Activated CD4-positive, alpha-beta T cell treated with anti-CD3 and anti-CD28 coated beads, Interleukin-2, amount 10 ng/mL, durations not matched to agents 24 days and 14 days (primary cell): ENCODE measurements at regions of chr14 and their contacts with region 1.

Region 1: GRCh38 chr14:99480917-99481744 is at the start of gene CCNK:
- DNase-seq: peak; percentile 100
- H3K4me3 Mint-ChIP-seq: peak within 1 kb of the TSS; percentile 98
- H3K27ac Mint-ChIP-seq: peak within 1 kb of the TSS; percentile 98
- H3K4me1 Mint-ChIP-seq: peaks cover 40% of the 10 kb centered on the region
- H3K27me3 Mint-ChIP-seq: no peaks in the 10 kb centered on the region
- total RNA-seq, gene CCNK: 79.5 and 83.6 TPM in 2 replicates

Region 2: GRCh38 chr14:99271951-99272631 is 209.0 kb before region 1 on chr14 and contains the start of gene BCL11B:
- intact Hi-C with region 1: loop called (anchors 2 kb)
- DNase-seq: peak; percentile 96
- H3K4me3 Mint-ChIP-seq: peak within 1 kb of the TSS; percentile 91
- H3K27ac Mint-ChIP-seq: peak within 1 kb of the TSS; percentile 95
- H3K4me1 Mint-ChIP-seq: peaks cover 42% of the 10 kb centered on the region
- H3K27me3 Mint-ChIP-seq: peaks cover 13% of the 10 kb centered on the region
- total RNA-seq, gene BCL11B: 48.2 and 48.5 TPM in 2 replicates

Region 3: DNA sequence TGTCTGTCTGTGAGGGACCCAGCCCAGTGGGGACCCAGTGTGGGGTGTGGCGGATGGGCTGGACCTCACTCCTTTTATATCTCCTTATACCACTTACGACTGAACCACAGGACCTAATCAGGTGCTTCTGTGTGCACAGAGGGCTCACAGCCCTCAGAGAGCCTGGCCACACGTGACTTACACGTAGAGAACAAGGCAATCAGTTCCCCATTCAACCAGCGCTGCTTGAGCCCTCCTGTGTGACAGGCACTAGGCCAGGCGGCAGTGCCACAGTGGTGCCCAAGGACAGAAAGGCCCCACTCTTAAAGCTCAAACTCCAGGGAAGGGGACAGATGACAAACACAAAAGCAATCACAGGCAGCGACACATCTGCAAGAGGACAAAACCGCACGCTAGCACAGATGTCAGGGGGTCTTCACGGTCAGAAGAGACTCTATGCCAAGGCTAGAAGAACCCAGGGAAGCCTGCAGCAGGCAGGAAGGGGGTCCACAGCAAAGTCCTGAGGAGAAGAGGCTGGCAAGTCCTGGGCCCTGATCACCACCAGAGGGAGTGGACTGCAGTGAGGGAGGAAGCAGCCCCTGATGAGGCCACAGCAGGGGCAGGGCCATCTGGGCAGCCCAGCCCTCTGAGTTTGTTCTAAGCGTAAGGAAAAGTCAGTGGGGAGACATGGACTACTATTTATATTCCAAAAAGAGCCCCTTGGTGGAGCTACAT is 39.8 kb before region 1 on chr14:
- intact Hi-C with region 1: no loop called
- DNase-seq: no peak
- H3K4me3 Mint-ChIP-seq: no peak overlapping the region
- H3K27ac Mint-ChIP-seq: peak overlapping the region; percentile 30
- H3K4me1 Mint-ChIP-seq: peaks cover 27% of the 10 kb centered on the region
- H3K27me3 Mint-ChIP-seq: no peaks in the 10 kb centered on the region

Region 4: DNA sequence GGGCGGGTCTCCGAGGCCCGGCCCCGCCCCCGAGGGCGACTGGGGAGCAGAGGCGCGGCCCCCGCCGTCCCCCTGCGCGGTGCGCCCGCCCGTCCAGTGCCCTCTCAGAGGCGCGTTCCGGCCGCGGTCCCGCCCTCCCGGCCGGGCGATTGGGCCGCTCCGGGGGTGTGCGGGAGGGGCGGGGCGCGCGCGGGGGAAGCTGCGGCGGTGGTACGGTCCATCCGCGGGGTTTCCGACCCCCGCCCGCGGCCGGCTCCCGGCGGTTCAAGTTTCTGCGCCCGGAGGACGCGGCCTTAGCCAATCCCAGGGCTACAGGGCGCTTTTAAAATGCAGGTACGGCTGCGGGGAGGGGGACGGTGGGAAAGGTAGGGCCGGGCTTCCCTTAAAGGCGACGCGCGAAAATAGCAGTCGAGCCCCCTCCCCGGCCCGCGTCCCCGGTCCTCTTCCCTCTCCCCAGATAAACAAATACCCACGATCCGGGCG is 123.2 kb after region 1 on chr14:
- intact Hi-C with region 1: loop called (anchors 1 kb)
- DNase-seq: peak; percentile 99
- H3K4me3 Mint-ChIP-seq: peak overlapping the region; percentile 84
- H3K27ac Mint-ChIP-seq: peak overlapping the region; percentile 91
- H3K4me1 Mint-ChIP-seq: peaks cover 22% of the 10 kb centered on the region
- H3K27me3 Mint-ChIP-seq: peaks cover 12% of the 10 kb centered on the region

Region 5: GRCh38 chr14:99779751-99780150 is 298.6 kb after region 1 on chr14:
- intact Hi-C with region 1: no loop called
- DNase-seq: no peak
- H3K4me3 Mint-ChIP-seq: no peak overlapping the region
- H3K27ac Mint-ChIP-seq: no peak overlapping the region
- H3K4me1 Mint-ChIP-seq: peaks cover 4% of the 10 kb centered on the region
- H3K27me3 Mint-ChIP-seq: peaks cover 33% of the 10 kb centered on the region

Region 6: DNA sequence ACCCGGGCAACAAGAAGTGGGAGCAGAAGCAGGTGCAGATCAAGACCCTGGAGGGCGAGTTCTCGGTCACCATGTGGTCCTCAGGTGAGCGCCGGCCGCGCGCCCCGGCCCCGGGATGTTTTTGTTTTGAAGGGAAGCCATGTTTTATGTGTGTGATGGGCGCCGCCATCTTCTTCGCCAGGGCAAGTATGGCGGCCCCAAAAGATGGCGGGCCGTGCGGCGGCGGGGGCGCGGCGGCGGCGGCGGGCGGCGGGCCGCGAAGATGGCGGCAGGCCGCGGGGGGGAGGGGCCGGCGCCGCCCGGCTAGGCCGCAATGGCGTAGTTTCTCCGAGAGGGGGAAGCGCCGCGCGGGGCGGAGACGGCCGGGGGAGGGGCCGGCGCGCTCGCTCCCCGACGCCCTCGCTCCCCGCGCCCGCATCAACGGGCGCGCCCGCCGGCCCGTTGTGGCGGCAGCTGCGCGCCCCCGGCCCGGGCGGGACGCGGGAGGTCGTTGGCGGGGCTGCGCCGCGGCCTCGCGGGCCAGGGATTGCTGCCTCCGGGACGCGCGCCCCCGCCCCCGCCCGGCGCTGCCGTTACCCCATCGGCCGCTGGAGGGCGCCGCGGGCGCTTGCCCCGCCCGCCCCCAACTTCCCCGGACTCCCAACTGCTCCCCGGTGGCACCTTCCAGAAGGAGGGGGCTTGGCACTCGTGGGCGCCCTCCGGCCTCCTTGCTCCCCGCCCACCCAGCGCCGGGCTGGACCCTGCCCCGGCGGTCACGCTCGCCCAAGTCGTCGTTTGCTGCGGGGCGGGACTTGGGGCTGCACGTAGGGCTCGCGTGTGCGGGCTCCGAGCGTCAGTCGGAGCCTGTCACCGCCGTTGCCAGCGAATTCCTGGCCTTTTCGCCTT is 759.0 kb after region 1 on chr14:
- intact Hi-C with region 1: loop called (anchors 2 kb)
- DNase-seq: peak; percentile 96
- H3K4me3 Mint-ChIP-seq: peak overlapping the region; percentile 96
- H3K27ac Mint-ChIP-seq: peak overlapping the region; percentile 89
- H3K4me1 Mint-ChIP-seq: peaks cover 46% of the 10 kb centered on the region
- H3K27me3 Mint-ChIP-seq: peaks cover 2% of the 10 kb centered on the region